Ovary (tissue), 10 donors: ENCODE measurements at regions of chr10 and their contacts with region 1.

Region 1: GRCh38 chr10:73493781-73494180 is 2.0 kb downstream of the PPP3CB start:
- DNase-seq: no peak
- H3K4me3 ChIP-seq: no peak overlapping the region
- H3K27ac ChIP-seq: no peak overlapping the region
- H3K4me1 ChIP-seq: peaks cover 6% of the 10 kb centered on the region
- H3K27me3 ChIP-seq: no peaks in the 10 kb centered on the region
- CTCF ChIP-seq: no peak
- EP300 ChIP-seq: no peak
- POLR2A ChIP-seq: no peak

Region 2: DNA sequence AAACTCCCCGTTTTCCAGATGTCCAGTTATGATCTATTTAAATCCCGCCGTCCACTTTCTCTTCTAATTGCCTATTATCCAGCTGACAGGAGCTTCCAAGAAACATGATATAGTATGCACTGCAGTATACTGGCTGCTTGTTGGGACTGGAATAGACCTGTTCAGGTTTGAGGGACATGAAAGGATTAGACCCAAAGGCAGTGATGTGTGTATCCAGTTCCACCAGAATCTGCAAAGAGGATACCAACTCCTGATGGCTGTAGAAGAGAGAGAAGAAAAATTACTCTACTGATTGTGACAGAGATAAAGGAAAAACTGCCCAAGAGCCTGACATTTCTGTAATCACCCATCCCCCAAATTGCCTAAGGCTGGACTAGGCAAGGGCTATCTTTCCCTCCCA is 69.3 kb before region 1 on chr10:
- intact Hi-C with region 1: loop called in 1 of 4 experiments (anchors 2 kb)
- DNase-seq: no peak
- H3K4me3 ChIP-seq: no peak overlapping the region
- H3K27ac ChIP-seq: no peak overlapping the region
- H3K4me1 ChIP-seq: no peaks in the 10 kb centered on the region
- H3K27me3 ChIP-seq: no peaks in the 10 kb centered on the region
- CTCF ChIP-seq: no peak
- EP300 ChIP-seq: no peak
- POLR2A ChIP-seq: no peak